Mammary epithelial cell (primary cell): ENCODE measurements at regions of chr11 and their contacts with region 1.

Region 1: GRCh38 chr11:124662106-124662505 is 11.4 kb downstream of the SIAE start:
- DNase-seq: no peak
- H3K4me3 ChIP-seq: no peak overlapping the region
- H3K27ac ChIP-seq: no peak overlapping the region
- H3K4me1 ChIP-seq: peaks cover 7% of the 10 kb centered on the region
- H3K27me3 ChIP-seq: no peaks in the 10 kb centered on the region
- CTCF ChIP-seq: no peak

Region 2: GRCh38 chr11:124712392-124712791 is 50.3 kb after region 1 on chr11:
- CTCF ChIA-PET with region 1: no interaction called
- dilution Hi-C with region 1: loop called (anchors 5 kb)
- in situ Hi-C with region 1: no loop called
- intact Hi-C with region 1: no loop called
- DNase-seq: no peak
- H3K4me3 ChIP-seq: no peak overlapping the region
- H3K27ac ChIP-seq: no peak overlapping the region
- H3K4me1 ChIP-seq: peaks cover 11% of the 10 kb centered on the region
- H3K27me3 ChIP-seq: no peaks in the 10 kb centered on the region
- CTCF ChIP-seq: no peak

Region 3: DNA sequence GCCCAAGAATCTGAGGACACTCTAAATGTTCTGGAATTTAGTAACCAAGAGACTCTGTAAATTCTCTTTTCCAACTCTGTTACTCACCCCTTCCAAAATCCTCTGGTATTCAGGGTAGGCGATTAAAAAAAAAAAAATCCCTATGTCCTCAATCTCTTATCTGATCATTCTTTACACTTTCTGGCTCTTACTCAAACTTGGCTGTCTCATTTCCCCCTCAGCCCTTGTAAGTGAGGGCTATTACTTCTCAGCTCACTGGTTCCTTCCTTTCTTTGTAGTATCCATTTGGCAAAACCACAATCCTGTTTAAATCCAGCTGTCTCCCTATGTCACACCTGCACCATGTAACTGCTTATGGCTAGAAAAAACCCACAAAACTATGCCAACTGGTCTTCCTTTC is 150.8 kb after region 1 on chr11:
- CTCF ChIA-PET with region 1: no interaction called
- dilution Hi-C with region 1: no loop called
- in situ Hi-C with region 1: no loop called
- intact Hi-C with region 1: no loop called
- DNase-seq: peak; percentile 19
- H3K4me3 ChIP-seq: no peak overlapping the region
- H3K27ac ChIP-seq: no peak overlapping the region
- H3K4me1 ChIP-seq: no peaks in the 10 kb centered on the region
- H3K27me3 ChIP-seq: peaks cover 10% of the 10 kb centered on the region
- CTCF ChIP-seq: no peak

Region 4: DNA sequence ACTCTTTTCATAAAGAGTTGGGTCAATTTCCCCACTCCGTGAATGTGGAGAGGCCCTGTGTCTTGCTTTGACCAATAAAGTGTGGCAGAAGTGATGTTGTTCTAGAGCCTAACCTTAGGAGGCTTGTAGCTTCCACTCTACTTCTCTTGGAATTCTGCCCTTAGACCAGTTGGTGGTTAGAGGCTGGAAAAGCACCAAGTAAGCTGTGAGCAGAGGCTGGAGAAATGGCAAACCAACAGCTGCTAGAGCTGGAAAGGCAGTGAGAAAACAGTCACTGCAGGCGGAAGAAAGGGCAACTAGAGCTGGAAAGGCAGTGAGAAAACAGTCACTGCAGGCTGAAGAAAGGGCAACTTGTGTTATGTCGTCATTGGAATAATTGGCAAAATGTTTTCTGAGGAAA is 167.9 kb after region 1 on chr11:
- CTCF ChIA-PET with region 1: no interaction called
- dilution Hi-C with region 1: loop called (anchors 5 kb)
- in situ Hi-C with region 1: loop called (anchors 10 kb)
- intact Hi-C with region 1: no loop called
- DNase-seq: no peak
- H3K4me3 ChIP-seq: no peak overlapping the region
- H3K27ac ChIP-seq: no peak overlapping the region
- H3K4me1 ChIP-seq: peaks cover 4% of the 10 kb centered on the region
- H3K27me3 ChIP-seq: peaks cover 42% of the 10 kb centered on the region
- CTCF ChIP-seq: no peak

Region 5: GRCh38 chr11:124898711-124899110 is 236.6 kb after region 1 on chr11:
- CTCF ChIA-PET with region 1: no interaction called
- dilution Hi-C with region 1: no loop called
- in situ Hi-C with region 1: no loop called
- intact Hi-C with region 1: no loop called
- DNase-seq: no peak
- H3K4me3 ChIP-seq: no peak overlapping the region
- H3K27ac ChIP-seq: peak overlapping the region; percentile 91
- H3K4me1 ChIP-seq: peaks cover 66% of the 10 kb centered on the region
- H3K27me3 ChIP-seq: no peaks in the 10 kb centered on the region
- CTCF ChIP-seq: no peak